ENCODE measurements at regions of chr2 and their contacts with region 1.

Region 1: DNA sequence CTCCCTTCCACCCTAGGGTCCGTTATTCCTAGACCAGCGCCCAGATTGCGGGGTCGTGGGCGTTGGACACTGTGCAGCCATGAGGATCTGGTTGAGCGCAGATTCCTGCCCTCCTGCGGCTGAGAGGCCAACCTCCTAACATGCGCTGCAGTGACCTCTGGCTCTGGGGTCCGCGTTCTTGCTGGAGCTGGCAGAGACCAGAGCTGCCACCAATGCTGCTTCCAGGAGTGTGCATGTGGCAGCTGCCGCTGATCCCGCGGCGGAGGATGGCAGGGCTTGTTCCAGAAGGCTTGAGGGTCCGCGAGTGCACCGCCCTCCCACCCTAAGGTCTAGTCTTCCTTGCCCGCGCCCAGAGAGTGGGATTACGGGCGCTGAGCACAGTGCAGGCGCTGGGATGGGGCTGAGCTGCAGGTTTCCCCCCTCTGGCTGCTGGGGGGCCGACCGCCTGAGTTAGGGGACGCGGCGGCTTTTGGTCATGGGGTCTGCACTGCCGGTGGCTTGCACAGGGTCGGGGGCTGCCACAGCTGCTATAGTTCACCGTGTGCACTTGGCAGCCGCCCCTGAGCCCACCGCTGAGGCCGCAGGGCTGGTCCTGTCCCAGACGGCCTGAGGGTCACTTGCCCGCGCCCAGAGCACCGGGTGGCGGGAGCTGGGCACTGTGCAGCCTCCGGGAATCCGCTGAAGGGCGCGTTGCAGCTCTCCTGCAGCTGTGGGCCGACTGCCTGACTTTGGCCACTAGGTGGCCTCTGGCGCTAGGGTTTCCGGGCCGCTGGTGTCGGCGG is 145.9 kb downstream of the CCDC74A start:
- DNase-seq: peak; percentile 43 to 78 (median 58)
- ATAC-seq: peak; percentile 99
- H3K4me3 ChIP-seq: no peak overlapping the region
- H3K27ac ChIP-seq: no peak overlapping the region
- H3K4me1 ChIP-seq: peaks cover 8 to 33% of the 10 kb centered on the region in 2 experiments; a peak in 4 of 5 replicates
- H3K27me3 ChIP-seq: peaks cover 0 to 6% of the 10 kb centered on the region in 2 experiments; a peak in 2 of 5 replicates
- CTCF ChIP-seq: peak; percentile 74 to 95 (median 83)
- EP300 ChIP-seq: no peak
- POLR2A ChIP-seq: no peak
- RAD21 ChIP-seq: peak; percentile 74 to 83

Region 2: GRCh38 chr2:131413148-131413747 is 260.3 kb before region 1 on chr2:
- CTCF ChIA-PET with region 1: interaction called, 12 read pairs
- POLR2A ChIA-PET with region 1: no interaction called
- in situ Hi-C with region 1: no loop called
- intact Hi-C with region 1: loop called (anchors 1 kb)
- DNase-seq: peak; percentile 47 to 71 (median 49)
- ATAC-seq: peak; percentile 91
- H3K4me3 ChIP-seq: no peak overlapping the region
- H3K27ac ChIP-seq: no peak overlapping the region
- H3K4me1 ChIP-seq: no peaks in the 10 kb centered on the region
- H3K27me3 ChIP-seq: peaks cover 16 to 27% of the 10 kb centered on the region in 2 experiments; a peak in 4 of 5 replicates
- CTCF ChIP-seq: peak; percentile 65 to 89 (median 78); a peak in 5 of 6 replicates
- EP300 ChIP-seq: no peak
- POLR2A ChIP-seq: no peak
- RAD21 ChIP-seq: peak; percentile 89 to 96

Region 3: DNA sequence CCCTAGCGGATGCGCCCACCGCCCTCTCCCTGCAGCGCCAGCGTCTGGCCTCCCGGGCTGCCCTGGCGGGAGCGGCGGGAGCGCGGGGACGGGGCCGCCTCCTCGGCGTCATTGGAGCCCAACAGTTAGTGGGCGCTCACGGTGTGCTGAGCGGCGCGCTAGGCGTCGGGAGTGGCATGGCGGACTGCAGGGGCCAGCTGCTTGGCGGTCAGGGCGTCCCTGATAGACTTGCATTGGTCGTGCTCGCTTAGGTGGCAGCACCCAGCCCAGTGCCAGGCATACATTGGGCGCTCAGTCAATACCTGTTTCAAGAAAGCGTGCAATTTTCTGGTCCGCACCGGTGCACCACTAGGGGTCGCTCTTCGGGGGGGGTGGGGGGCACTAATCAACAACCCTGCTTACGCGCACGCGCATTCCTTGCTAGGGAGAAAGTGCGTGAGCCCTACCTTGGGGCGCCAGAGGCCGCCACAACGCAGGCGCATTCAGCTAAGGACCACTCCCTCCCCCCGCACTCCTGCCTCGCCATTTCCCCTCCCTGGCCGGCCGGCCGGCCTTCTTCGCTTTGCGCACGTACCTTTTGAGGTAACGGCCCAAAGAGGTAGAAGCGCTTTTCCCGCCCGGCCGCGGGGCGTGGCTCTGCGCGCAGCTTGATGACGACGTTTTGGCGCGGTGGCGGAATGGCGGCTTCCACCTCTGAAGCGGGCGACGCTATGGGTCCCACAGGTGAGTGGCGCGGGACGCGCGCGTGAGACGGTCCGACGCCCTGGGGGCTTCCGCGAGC is 181.0 kb before region 1 on chr2:
- CTCF ChIA-PET with region 1: interaction called, 3 read pairs
- POLR2A ChIA-PET with region 1: interaction called, 3 read pairs
- in situ Hi-C with region 1: no loop called
- intact Hi-C with region 1: loop called (anchors 5 kb)
- DNase-seq: peak; percentile 93 to 100 (median 96)
- ATAC-seq: peak; percentile 89
- H3K4me3 ChIP-seq: peak overlapping the region; percentile 99
- H3K27ac ChIP-seq: peak overlapping the region; percentile 98
- H3K4me1 ChIP-seq: peaks cover 6 to 39% of the 10 kb centered on the region in 2 experiments; a peak in 4 of 5 replicates
- H3K27me3 ChIP-seq: no peaks in the 10 kb centered on the region
- CTCF ChIP-seq: peak; percentile 69 to 95 (median 87)
- EP300 ChIP-seq: no peak
- POLR2A ChIP-seq: peak; percentile 72
- RAD21 ChIP-seq: peak in 1 of 2 experiments; percentile 33; a peak in 2 of 4 replicates

Region 4: GRCh38 chr2:131659168-131659572 is 14.4 kb before region 1 on chr2:
- CTCF ChIA-PET with region 1: no interaction called
- POLR2A ChIA-PET with region 1: no interaction called
- in situ Hi-C with region 1: no loop called
- intact Hi-C with region 1: no loop called
- DNase-seq: no peak
- ATAC-seq: no peak
- H3K4me3 ChIP-seq: no peak overlapping the region
- H3K27ac ChIP-seq: no peak overlapping the region
- H3K4me1 ChIP-seq: peaks cover 11 to 18% of the 10 kb centered on the region in 2 experiments
- H3K27me3 ChIP-seq: no peaks in the 10 kb centered on the region
- CTCF ChIP-seq: no peak
- EP300 ChIP-seq: no peak
- POLR2A ChIP-seq: no peak
- RAD21 ChIP-seq: no peak

Region 5: DNA sequence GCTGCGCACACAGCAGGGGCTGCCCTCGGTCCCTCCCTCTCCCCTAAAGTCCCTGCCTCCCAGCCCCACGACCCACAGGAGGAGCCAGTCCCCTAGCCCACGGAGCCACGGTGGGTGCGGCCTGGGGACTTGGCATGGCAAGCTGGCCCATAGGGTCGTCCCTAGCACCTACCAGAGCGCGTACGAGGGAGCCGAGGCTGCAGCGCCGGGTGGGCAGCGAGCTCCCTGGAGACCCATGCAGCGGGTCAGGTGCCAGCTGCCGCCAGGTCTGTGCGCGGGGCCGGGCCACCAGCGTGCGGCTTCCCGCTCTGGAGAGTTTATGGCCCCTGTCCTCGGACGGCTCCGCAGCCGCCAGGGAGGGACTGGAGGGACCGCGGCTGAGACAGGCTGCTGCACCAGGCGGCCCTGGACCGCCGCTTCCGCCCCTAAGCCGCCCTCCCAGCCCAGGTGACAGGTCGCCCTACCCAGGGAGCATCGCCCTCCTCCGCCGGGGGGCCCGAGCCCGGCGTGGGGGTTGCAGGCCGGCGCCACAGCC is 127.7 kb after region 1 on chr2:
- CTCF ChIA-PET with region 1: no interaction called
- POLR2A ChIA-PET with region 1: no interaction called
- in situ Hi-C with region 1: no loop called
- intact Hi-C with region 1: loop called (anchors 2 kb)
- DNase-seq: peak in 1 of 4 experiments; percentile 6
- ATAC-seq: no peak
- H3K4me3 ChIP-seq: no peak overlapping the region
- H3K27ac ChIP-seq: no peak overlapping the region
- H3K4me1 ChIP-seq: peaks cover 0 to 16% of the 10 kb centered on the region in 2 experiments; a peak in 2 of 5 replicates
- H3K27me3 ChIP-seq: no peaks in the 10 kb centered on the region
- CTCF ChIP-seq: no peak
- EP300 ChIP-seq: no peak
- POLR2A ChIP-seq: no peak
- RAD21 ChIP-seq: no peak

Measured in K562 (cell line).